Tibial artery (tissue), 4 donors: ENCODE measurements at regions of chr3 and their contacts with region 1.

Region 1: DNA sequence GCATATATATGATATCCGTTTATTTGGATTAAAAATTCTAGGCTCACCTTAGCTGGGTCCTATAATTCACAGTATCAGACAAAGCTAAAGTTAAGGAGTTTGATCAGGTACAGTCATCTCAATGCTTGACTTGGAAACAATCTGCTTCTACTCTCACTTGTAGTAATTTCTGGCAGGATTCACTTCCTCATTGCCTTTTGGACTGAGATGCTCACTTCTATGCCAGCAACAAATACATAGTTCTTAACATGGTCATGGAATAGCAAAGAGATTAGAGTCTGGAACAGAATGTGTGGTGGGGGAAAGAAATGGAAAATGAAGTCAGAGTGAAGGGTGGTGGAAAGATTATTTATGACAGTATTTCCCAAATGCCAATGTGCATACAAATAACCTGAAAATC is 693.6 kb downstream of the CADM2 start:
- DNase-seq: no peak
- H3K4me3 ChIP-seq: no peak overlapping the region
- H3K27ac ChIP-seq: no peak overlapping the region
- H3K4me1 ChIP-seq: no peaks in the 10 kb centered on the region
- H3K27me3 ChIP-seq: no peaks in the 10 kb centered on the region
- CTCF ChIP-seq: no peak

Region 2: DNA sequence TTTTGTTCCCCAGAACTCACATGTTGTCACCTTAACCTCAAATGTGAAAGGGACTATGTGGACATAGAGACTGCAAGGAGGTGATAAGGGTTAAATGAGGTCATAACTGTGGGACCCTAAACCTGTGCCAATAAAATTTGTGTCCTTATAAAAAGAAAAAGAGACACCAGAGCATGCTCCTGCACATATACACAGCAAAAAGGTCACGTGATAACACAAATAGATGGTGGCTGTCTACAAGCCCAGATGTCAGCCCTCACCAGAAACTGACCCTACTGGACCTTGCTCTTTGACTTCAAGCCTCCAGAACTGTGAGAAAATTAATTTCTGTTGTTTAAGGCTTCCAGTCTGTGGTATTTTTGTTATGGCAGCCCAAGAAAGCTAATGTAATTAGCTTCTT is 664.1 kb after region 1 on chr3:
- intact Hi-C with region 1: loop called (anchors 10 kb)
- DNase-seq: no peak
- H3K4me3 ChIP-seq: no peak overlapping the region
- H3K27ac ChIP-seq: no peak overlapping the region
- H3K4me1 ChIP-seq: no peaks in the 10 kb centered on the region
- H3K27me3 ChIP-seq: no peaks in the 10 kb centered on the region
- CTCF ChIP-seq: no peak